CD8-positive, alpha-beta memory T cell (primary cell): ENCODE measurements at regions of chr3 and their contacts with region 1.

Region 1: GRCh38 chr3:197889204-197889930 is 60.6 kb upstream of the RPL35A start:
- DNase-seq: no peak
- H3K4me3 ChIP-seq: no peak overlapping the region
- H3K4me3 Mint-ChIP-seq: no peak overlapping the region
- H3K27ac ChIP-seq: no peak overlapping the region
- H3K27ac Mint-ChIP-seq: peak overlapping the region in 3 of 8 donors; percentile 47 to 90 (median 61)
- H3K4me1 ChIP-seq: no peaks in the 10 kb centered on the region
- H3K4me1 Mint-ChIP-seq: no peaks in the 10 kb centered on the region
- H3K27me3 ChIP-seq: no peaks in the 10 kb centered on the region
- H3K27me3 Mint-ChIP-seq: no peaks in the 10 kb centered on the region

Region 2: GRCh38 chr3:197820550-197821335 is 68.6 kb before region 1 on chr3:
- CTCF ChIA-PET with region 1: no interaction called
- POLR2A ChIA-PET with region 1: no interaction called
- DNase-seq: no peak
- H3K4me3 ChIP-seq: no peak overlapping the region
- H3K4me3 Mint-ChIP-seq: no peak overlapping the region
- H3K27ac ChIP-seq: no peak overlapping the region
- H3K27ac Mint-ChIP-seq: peak overlapping the region in 7 of 8 donors; percentile 14 to 83 (median 65)
- H3K4me1 ChIP-seq: no peaks in the 10 kb centered on the region
- H3K4me1 Mint-ChIP-seq: peaks cover 3 to 15% (median 5%) of the 10 kb centered on the region in 3 donors
- H3K27me3 ChIP-seq: no peaks in the 10 kb centered on the region
- H3K27me3 Mint-ChIP-seq: no peaks in the 10 kb centered on the region

Region 3: DNA sequence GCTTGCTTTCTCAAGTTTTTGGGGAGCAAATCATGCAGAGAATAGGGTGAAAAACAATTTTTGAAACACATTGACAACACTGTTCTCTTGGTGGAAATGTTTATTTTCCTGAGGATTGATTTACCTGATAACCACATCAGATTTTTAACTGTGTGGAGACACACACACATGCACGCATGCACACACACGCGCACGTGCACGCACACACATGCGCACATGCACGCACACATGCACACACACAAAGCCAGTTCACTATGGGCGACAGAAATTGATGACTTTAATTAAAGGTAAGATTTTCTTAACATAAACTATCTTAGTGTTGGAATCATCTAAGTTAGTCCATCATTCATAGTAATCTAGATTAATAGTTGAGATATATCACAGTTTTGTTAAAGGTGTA is 85.9 kb after region 1 on chr3:
- CTCF ChIA-PET with region 1: no interaction called
- POLR2A ChIA-PET with region 1: interaction called, 11 read pairs
- DNase-seq: no peak
- H3K4me3 ChIP-seq: no peak overlapping the region
- H3K4me3 Mint-ChIP-seq: no peak overlapping the region
- H3K27ac ChIP-seq: no peak overlapping the region
- H3K27ac Mint-ChIP-seq: no peak overlapping the region
- H3K4me1 ChIP-seq: no peaks in the 10 kb centered on the region
- H3K4me1 Mint-ChIP-seq: no peaks in the 10 kb centered on the region
- H3K27me3 ChIP-seq: no peaks in the 10 kb centered on the region
- H3K27me3 Mint-ChIP-seq: peaks cover 0 to 2% of the 10 kb centered on the region in 2 donors